Endothelial cell of umbilical vein (primary cell): ENCODE measurements at regions of chr5 and their contacts with region 1.

Region 1: DNA sequence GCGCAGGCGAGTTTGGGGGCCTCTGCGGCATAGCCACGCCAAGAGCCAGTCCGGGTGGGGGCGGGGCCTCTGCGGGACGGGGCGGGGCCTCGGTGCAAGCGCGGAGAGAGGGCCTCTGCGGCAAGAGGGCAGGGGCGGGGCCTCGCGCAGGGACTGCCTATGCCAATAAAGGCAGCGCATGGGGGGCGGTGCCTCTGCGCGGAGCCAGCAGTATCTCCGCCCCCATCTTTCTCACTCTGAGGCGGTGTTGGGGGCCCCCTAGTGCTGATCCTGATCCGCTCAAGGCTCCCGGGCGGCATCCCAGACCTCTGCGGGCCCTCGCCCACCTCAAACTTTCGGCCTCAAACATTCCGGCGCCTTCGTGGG is 9.2 kb upstream of the GPRIN1 start:
- DNase-seq: peak; percentile 87
- H3K4me3 ChIP-seq: no peak overlapping the region
- H3K27ac ChIP-seq: no peak overlapping the region
- H3K4me1 ChIP-seq: peaks cover 21% of the 10 kb centered on the region
- H3K27me3 ChIP-seq: peaks cover 29 to 30% of the 10 kb centered on the region in 2 experiments
- CTCF ChIP-seq: peak; percentile 47 to 66
- POLR2A ChIP-seq: no peak

Region 2: GRCh38 chr5:176388444-176389134 is 230.6 kb before region 1 on chr5 and contains the starts of genes HIGD2A and NOP16:
- CTCF ChIA-PET with region 1: no interaction called
- POLR2A ChIA-PET with region 1: no interaction called
- dilution Hi-C with region 1: no loop called
- intact Hi-C with region 1: loop called (anchors 1 kb)
- DNase-seq: peak; percentile 98
- H3K4me3 ChIP-seq: peak within 1 kb of the TSS; percentile 64 to 85 (median 65)
- H3K27ac ChIP-seq: peak within 1 kb of the TSS; percentile 79
- H3K4me1 ChIP-seq: peaks cover 14% of the 10 kb centered on the region
- H3K27me3 ChIP-seq: no peaks in the 10 kb centered on the region
- CTCF ChIP-seq: no peak
- POLR2A ChIP-seq: peak; percentile 74
- total RNA-seq, gene HIGD2A: 96.2 and 103 TPM in 2 replicates
- total RNA-seq, gene NOP16: 47.4 and 51.6 TPM in 2 replicates

Region 3: DNA sequence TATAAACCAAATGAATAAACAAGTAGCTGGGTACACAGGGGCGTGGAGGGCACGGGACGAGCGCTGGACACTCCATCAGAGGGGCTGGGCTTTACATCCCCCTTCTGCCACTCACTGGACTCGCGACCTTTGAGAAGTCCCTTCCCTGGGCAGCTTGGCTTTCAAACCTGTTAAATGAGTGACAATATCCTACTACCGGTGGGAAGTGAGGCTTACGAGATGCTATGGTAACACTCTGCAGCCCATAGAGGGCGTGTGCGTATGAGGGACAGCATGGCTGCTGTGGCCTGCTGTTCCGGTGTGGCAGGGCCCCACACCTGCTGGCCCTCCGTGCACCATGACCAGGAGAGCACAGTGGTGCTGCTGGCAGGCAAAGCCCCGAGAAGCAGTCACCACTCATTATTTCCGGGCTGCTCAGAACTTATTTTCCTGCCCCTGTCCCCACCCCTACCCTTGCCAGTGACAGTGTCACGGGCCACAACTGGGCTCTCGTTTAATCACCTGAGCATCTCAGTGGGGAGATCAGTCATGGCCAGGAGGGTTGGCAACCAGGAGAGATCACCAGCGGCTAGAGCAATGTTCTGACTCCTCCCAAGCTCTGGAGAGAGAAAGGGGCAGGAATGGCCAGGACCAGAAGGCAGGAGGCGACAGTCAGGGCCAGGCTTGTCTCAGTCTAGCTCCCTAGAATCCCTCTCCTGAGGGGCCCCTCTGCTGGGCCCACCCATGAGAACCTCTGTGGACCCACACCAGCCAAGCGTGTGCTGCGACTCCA is 213.3 kb before region 1 on chr5:
- CTCF ChIA-PET with region 1: no interaction called
- POLR2A ChIA-PET with region 1: no interaction called
- dilution Hi-C with region 1: no loop called
- intact Hi-C with region 1: no loop called
- DNase-seq: no peak
- H3K4me3 ChIP-seq: no peak overlapping the region
- H3K27ac ChIP-seq: no peak overlapping the region
- H3K4me1 ChIP-seq: no peaks in the 10 kb centered on the region
- H3K27me3 ChIP-seq: no peaks in the 10 kb centered on the region
- CTCF ChIP-seq: no peak
- POLR2A ChIP-seq: no peak

Region 4: GRCh38 chr5:176573564-176574296 is 45.5 kb before region 1 on chr5:
- CTCF ChIA-PET with region 1: interaction called, 6 read pairs
- POLR2A ChIA-PET with region 1: no interaction called
- dilution Hi-C with region 1: no loop called
- intact Hi-C with region 1: loop called (anchors 1 kb)
- DNase-seq: peak; percentile 45
- H3K4me3 ChIP-seq: no peak overlapping the region
- H3K27ac ChIP-seq: no peak overlapping the region
- H3K4me1 ChIP-seq: no peaks in the 10 kb centered on the region
- H3K27me3 ChIP-seq: no peaks in the 10 kb centered on the region
- CTCF ChIP-seq: peak; percentile 74 to 91
- POLR2A ChIP-seq: no peak

Region 5: GRCh38 chr5:176596689-176597416 is 22.3 kb before region 1 on chr5:
- CTCF ChIA-PET with region 1: interaction called, 4 read pairs
- POLR2A ChIA-PET with region 1: no interaction called
- dilution Hi-C with region 1: no loop called
- intact Hi-C with region 1: loop called (anchors 2 kb)
- DNase-seq: peak; percentile 60
- H3K4me3 ChIP-seq: peak overlapping the region in 1 of 3 experiments; percentile 34
- H3K27ac ChIP-seq: no peak overlapping the region
- H3K4me1 ChIP-seq: no peaks in the 10 kb centered on the region
- H3K27me3 ChIP-seq: no peaks in the 10 kb centered on the region
- CTCF ChIP-seq: peak in 1 of 2 donors; percentile 26
- POLR2A ChIP-seq: no peak

Region 6: GRCh38 chr5:176629853-176630712 is 10.9 kb after region 1 on chr5 and contains the starts of genes EIF4E1B and SNCB:
- CTCF ChIA-PET with region 1: interaction called, 11 read pairs
- POLR2A ChIA-PET with region 1: no interaction called
- dilution Hi-C with region 1: no loop called
- intact Hi-C with region 1: loop called (anchors 1 kb)
- DNase-seq: peak; percentile 49
- H3K4me3 ChIP-seq: peak within 1 kb of the TSS in 2 of 3 experiments; percentile 1 to 18
- H3K27ac ChIP-seq: no peak within 1 kb of the TSS
- H3K4me1 ChIP-seq: no peaks in the 10 kb centered on the region
- H3K27me3 ChIP-seq: peaks cover 59 to 61% of the 10 kb centered on the region in 2 experiments
- CTCF ChIP-seq: no peak
- POLR2A ChIP-seq: no peak
- total RNA-seq, gene EIF4E1B: not detected in 2 replicates
- total RNA-seq, gene SNCB: not detected in 2 replicates